PC-3 (cell line): ENCODE measurements at regions of chr6 and their contacts with region 1.

Region 1: GRCh38 chr6:151635741-151636140 is 141.9 kb downstream of the CCDC170 start:
- DNase-seq: no peak
- ATAC-seq: no peak
- H3K4me3 ChIP-seq: no peak overlapping the region
- H3K27ac ChIP-seq: no peak overlapping the region
- H3K4me1 ChIP-seq: no peaks in the 10 kb centered on the region
- H3K27me3 ChIP-seq: no peaks in the 10 kb centered on the region
- CTCF ChIP-seq: no peak

Region 2: GRCh38 chr6:151553416-151554165 is 82.2 kb before region 1 on chr6:
- CTCF ChIA-PET with region 1: no interaction called
- POLR2A ChIA-PET with region 1: no interaction called
- intact Hi-C with region 1: no loop called
- DNase-seq: no peak
- ATAC-seq: no peak
- H3K4me3 ChIP-seq: no peak overlapping the region
- H3K27ac ChIP-seq: no peak overlapping the region
- H3K4me1 ChIP-seq: no peaks in the 10 kb centered on the region; the same call in 1 of the 2 replicates
- H3K27me3 ChIP-seq: no peaks in the 10 kb centered on the region
- CTCF ChIP-seq: no peak

Region 3: DNA sequence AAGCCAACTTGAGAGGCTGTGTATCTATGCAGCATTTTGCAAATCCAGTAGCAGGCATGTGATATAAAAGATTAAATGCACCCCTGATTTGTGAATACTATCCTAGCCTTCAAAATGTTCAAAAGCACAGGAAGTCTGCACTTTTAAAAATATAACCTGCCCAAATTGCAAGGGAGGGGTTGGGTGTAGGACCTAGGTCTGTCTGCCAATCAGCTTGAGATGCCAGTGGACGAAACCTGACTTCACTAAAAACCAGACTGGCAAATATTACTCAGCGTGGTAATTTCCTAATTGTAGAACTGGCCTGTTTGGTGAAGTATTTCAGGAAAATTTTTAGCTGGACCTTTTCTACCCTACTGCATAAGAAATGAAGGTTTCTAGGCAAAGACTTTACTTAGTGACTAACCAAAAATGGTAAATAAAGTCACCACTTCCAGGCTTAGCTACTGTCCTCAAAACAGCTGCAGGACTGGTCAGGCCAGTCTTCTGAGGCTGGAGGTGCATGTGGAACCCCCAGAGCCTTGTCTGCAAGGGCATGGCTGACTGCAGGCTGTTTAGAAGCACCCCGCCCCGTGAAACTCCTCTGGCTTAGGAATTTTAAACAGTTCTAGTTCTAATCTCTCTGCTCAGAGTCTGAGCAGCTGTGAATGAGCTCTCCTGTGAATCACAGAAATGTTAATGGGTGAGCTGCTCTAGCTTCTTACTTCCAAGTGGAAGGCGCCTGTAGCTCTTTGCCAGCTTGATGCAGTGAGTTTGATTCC is 67.3 kb after region 1 on chr6:
- CTCF ChIA-PET with region 1: no interaction called
- POLR2A ChIA-PET with region 1: interaction called, 12 read pairs
- intact Hi-C with region 1: no loop called
- DNase-seq: peak; percentile 63
- ATAC-seq: peak; percentile 38
- H3K4me3 ChIP-seq: no peak overlapping the region
- H3K27ac ChIP-seq: peak overlapping the region; percentile 33
- H3K4me1 ChIP-seq: peaks cover 14% of the 10 kb centered on the region
- H3K27me3 ChIP-seq: no peaks in the 10 kb centered on the region
- CTCF ChIP-seq: no peak

Region 4: GRCh38 chr6:151885234-151885633 is 249.5 kb after region 1 on chr6:
- CTCF ChIA-PET with region 1: no interaction called
- POLR2A ChIA-PET with region 1: no interaction called
- intact Hi-C with region 1: no loop called
- DNase-seq: peak; percentile 72
- ATAC-seq: peak; percentile 38; the same call in 1 of the 2 replicates
- H3K4me3 ChIP-seq: no peak overlapping the region
- H3K27ac ChIP-seq: no peak overlapping the region
- H3K4me1 ChIP-seq: peaks cover 9% of the 10 kb centered on the region; the same call in 1 of the 2 replicates
- H3K27me3 ChIP-seq: no peaks in the 10 kb centered on the region
- CTCF ChIP-seq: no peak